CD14-positive monocyte (primary cell): ENCODE measurements at regions of chr6 and their contacts with region 1.

Region 1: GRCh38 chr6:132768051-132768517 is 10.4 kb upstream of the VNN2 start:
- DNase-seq: peak; percentile 64 to 68 (median 64)
- H3K4me3 ChIP-seq: peak overlapping the region; percentile 32 to 73 (median 44)
- H3K4me3 Mint-ChIP-seq: peak overlapping the region; percentile 75 to 88
- H3K27ac ChIP-seq: peak overlapping the region in 1 of 2 donors; percentile 42
- H3K27ac Mint-ChIP-seq: peak overlapping the region; percentile 63 to 91 (median 79)
- H3K4me1 ChIP-seq: peaks cover 17 to 24% of the 10 kb centered on the region in 2 donors
- H3K4me1 Mint-ChIP-seq: peaks cover 31% of the 10 kb centered on the region
- H3K27me3 ChIP-seq: no peaks in the 10 kb centered on the region
- H3K27me3 Mint-ChIP-seq: peaks cover 0 to 2% (median 2%) of the 10 kb centered on the region in 3 donors
- CTCF ChIP-seq: peak; percentile 99

Region 2: DNA sequence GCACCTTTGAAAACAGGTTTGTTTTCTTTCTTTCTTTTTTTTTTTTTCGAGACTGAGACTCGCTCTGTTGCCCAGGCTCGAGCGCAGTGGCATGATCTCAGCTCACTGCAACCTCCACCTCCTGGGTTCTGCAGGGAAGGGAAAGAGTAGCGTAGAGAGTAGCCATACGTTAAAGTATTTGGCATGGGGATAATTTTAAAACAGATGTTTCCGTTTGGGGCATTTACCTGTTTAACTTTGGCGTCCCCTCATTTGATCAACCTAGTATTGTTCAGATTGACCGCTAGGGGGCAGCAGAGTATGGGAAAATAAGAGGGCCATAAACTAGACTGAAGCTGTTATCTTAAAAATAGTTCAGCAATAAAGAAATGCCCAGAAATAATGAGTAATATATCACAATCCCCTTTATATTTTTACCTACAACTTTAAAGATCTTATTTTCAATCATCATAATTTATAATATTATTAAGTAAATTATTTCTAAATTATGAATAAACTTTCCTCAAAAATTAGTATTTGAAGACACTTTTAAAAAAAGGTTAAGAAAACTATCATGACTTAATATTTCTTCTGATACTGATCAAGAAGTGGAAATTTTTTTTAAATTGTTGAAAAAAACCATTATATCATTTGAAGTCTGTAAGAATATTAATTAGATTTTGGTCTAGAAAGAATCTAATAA is 237.7 kb before region 1 on chr6:
- intact Hi-C with region 1: loop called in 1 of 2 experiments (anchors 5 kb)
- DNase-seq: peak; percentile 46 to 64 (median 63)
- H3K4me3 ChIP-seq: no peak overlapping the region
- H3K4me3 Mint-ChIP-seq: peak overlapping the region; percentile 26 to 41
- H3K27ac ChIP-seq: no peak overlapping the region
- H3K27ac Mint-ChIP-seq: no peak overlapping the region
- H3K4me1 ChIP-seq: no peaks in the 10 kb centered on the region
- H3K4me1 Mint-ChIP-seq: peaks cover 8% of the 10 kb centered on the region
- H3K27me3 ChIP-seq: no peaks in the 10 kb centered on the region
- H3K27me3 Mint-ChIP-seq: peaks cover 1 to 3% (median 2%) of the 10 kb centered on the region in 3 donors
- CTCF ChIP-seq: peak; percentile 92

Region 3: DNA sequence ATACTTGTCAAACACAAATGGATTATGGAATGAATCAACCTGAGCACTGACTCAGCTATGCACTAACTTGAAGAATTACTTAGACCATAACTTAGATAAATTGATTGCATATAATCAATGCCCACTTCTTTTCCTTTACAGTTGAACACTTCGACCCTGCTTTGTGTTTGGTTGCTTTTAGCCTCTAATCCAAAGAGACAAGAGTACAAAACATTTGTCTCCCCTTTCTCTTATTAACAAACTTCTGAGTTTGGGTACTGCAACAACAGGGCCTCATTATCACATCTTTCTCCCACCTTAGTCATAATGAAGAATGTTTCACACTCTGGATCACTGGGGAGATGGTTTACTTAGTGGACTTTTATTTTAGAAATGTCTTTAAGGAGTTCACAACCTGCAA is 200.5 kb before region 1 on chr6:
- intact Hi-C with region 1: no loop called
- DNase-seq: no peak
- H3K4me3 ChIP-seq: no peak overlapping the region
- H3K4me3 Mint-ChIP-seq: no peak overlapping the region
- H3K27ac ChIP-seq: no peak overlapping the region
- H3K27ac Mint-ChIP-seq: no peak overlapping the region
- H3K4me1 ChIP-seq: peaks cover 10 to 16% of the 10 kb centered on the region in 2 donors
- H3K4me1 Mint-ChIP-seq: peaks cover 11% of the 10 kb centered on the region
- H3K27me3 ChIP-seq: peaks cover 5 to 14% of the 10 kb centered on the region in 2 donors
- H3K27me3 Mint-ChIP-seq: peaks cover 0 to 14% (median 2%) of the 10 kb centered on the region in 3 donors
- CTCF ChIP-seq: no peak